ENCODE measurements at regions of chr19 and their contacts with region 1.

Region 1: DNA sequence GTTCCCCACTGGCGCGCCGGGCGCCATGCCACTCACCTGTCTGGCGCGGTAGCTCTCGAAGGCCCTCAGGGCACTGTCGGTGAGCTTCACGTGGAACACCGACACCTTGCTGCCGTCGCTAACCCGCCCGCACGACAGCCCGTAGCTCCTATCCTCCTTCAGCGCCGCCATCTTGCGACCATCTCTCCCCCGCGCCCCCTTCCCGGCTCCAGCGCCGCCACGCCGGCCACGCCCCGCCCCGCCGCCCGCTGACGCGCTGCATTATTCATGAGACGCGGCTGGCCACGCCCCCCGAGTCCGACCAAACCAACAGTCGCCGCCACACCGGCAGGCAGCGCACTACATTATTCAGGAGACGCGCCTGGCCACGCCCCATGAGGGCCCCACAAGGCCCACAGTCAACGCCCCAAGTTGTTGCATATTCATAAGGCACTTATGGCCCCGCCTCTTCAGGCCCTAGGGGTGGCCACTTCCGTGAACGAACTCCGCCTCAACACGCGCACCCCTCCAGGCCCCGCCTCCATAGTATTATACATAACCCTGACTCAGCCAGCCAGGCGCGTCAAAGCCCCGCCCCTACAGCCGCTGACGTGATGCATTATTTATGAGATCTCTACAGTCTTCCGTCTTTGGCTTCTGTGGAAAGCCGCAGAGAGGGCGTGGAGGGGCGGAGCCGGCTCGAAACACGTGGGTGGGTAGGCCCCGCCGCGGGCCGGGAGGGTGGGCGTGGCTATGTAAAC is at the start of gene ELL:
- DNase-seq: peak; percentile 100
- H3K4me3 Mint-ChIP-seq: peak within 1 kb of the TSS; percentile 90
- H3K27ac Mint-ChIP-seq: peak within 1 kb of the TSS; percentile 92
- H3K4me1 Mint-ChIP-seq: peaks cover 16% of the 10 kb centered on the region
- H3K27me3 Mint-ChIP-seq: no peaks in the 10 kb centered on the region
- total RNA-seq, gene ELL: 24.7 to 29.7 TPM

Region 2: GRCh38 chr19:18469069-18469846 is 52.8 kb before region 1 on chr19:
- CTCF ChIA-PET with region 1: interaction called, 61 read pairs
- POLR2A ChIA-PET with region 1: interaction called, 3 read pairs
- intact Hi-C with region 1: loop called (anchors 2 kb)
- DNase-seq: peak; percentile 75
- H3K4me3 Mint-ChIP-seq: no peak overlapping the region
- H3K27ac Mint-ChIP-seq: peak overlapping the region; percentile 13
- H3K4me1 Mint-ChIP-seq: peaks cover 18% of the 10 kb centered on the region
- H3K27me3 Mint-ChIP-seq: no peaks in the 10 kb centered on the region

Region 3: GRCh38 chr19:18496167-18496979 is 25.7 kb before region 1 on chr19:
- CTCF ChIA-PET with region 1: interaction called, 43 read pairs
- POLR2A ChIA-PET with region 1: interaction called, 5 read pairs
- intact Hi-C with region 1: loop called (anchors 1 kb)
- DNase-seq: peak; percentile 85
- H3K4me3 Mint-ChIP-seq: peak overlapping the region; percentile 36
- H3K27ac Mint-ChIP-seq: peak overlapping the region; percentile 90
- H3K4me1 Mint-ChIP-seq: peaks cover 80% of the 10 kb centered on the region
- H3K27me3 Mint-ChIP-seq: no peaks in the 10 kb centered on the region

Region 4: GRCh38 chr19:18557474-18558201 is 35.6 kb after region 1 on chr19 and contains the start of gene KXD1:
- CTCF ChIA-PET with region 1: interaction called, 16 read pairs
- POLR2A ChIA-PET with region 1: interaction called, 21 read pairs
- intact Hi-C with region 1: loop called (anchors 1 kb)
- DNase-seq: peak; percentile 99
- H3K4me3 Mint-ChIP-seq: peak within 1 kb of the TSS; percentile 86
- H3K27ac Mint-ChIP-seq: peak within 1 kb of the TSS; percentile 94
- H3K4me1 Mint-ChIP-seq: peaks cover 13% of the 10 kb centered on the region
- H3K27me3 Mint-ChIP-seq: no peaks in the 10 kb centered on the region
- total RNA-seq, gene KXD1: 112 to 114 TPM

Region 5: GRCh38 chr19:18636183-18636968 is 114.3 kb after region 1 on chr19:
- CTCF ChIA-PET with region 1: interaction called, 3 read pairs
- POLR2A ChIA-PET with region 1: no interaction called
- intact Hi-C with region 1: loop called (anchors 1 kb)
- DNase-seq: peak; percentile 99
- H3K4me3 Mint-ChIP-seq: peak overlapping the region; percentile 82
- H3K27ac Mint-ChIP-seq: peak overlapping the region; percentile 74
- H3K4me1 Mint-ChIP-seq: peaks cover 22% of the 10 kb centered on the region
- H3K27me3 Mint-ChIP-seq: no peaks in the 10 kb centered on the region